OCI-LY7 (cell line): ENCODE measurements at regions of chr2 and their contacts with region 1.

Region 1: GRCh38 chr2:24164125-24164973 is 10.5 kb upstream of the FAM228A start:
- DNase-seq: peak; percentile 67
- H3K4me3 ChIP-seq: no peak overlapping the region
- H3K27ac ChIP-seq: no peak overlapping the region
- H3K4me1 ChIP-seq: no peaks in the 10 kb centered on the region
- CTCF ChIP-seq: peak; percentile 99

Region 2: GRCh38 chr2:23824777-23825212 is 339.6 kb before region 1 on chr2:
- CTCF ChIA-PET with region 1: no interaction called
- POLR2A ChIA-PET with region 1: no interaction called
- intact Hi-C with region 1: loop called (anchors 1 kb)
- DNase-seq: peak; percentile 73
- H3K4me3 ChIP-seq: no peak overlapping the region
- H3K27ac ChIP-seq: no peak overlapping the region
- H3K4me1 ChIP-seq: peaks cover 7% of the 10 kb centered on the region
- CTCF ChIP-seq: peak; percentile 93

Region 3: GRCh38 chr2:23988371-23988770 is 176.0 kb before region 1 on chr2:
- CTCF ChIA-PET with region 1: no interaction called
- POLR2A ChIA-PET with region 1: interaction called, 4 read pairs
- intact Hi-C with region 1: loop called (anchors 5 kb)
- DNase-seq: peak; percentile 38
- H3K4me3 ChIP-seq: no peak overlapping the region
- H3K27ac ChIP-seq: no peak overlapping the region
- H3K4me1 ChIP-seq: no peaks in the 10 kb centered on the region
- CTCF ChIP-seq: peak; percentile 74

Region 4: GRCh38 chr2:24021193-24021998 is 143.0 kb before region 1 on chr2:
- CTCF ChIA-PET with region 1: no interaction called
- POLR2A ChIA-PET with region 1: no interaction called
- intact Hi-C with region 1: loop called (anchors 1 kb)
- DNase-seq: peak; percentile 44
- H3K4me3 ChIP-seq: no peak overlapping the region
- H3K27ac ChIP-seq: no peak overlapping the region
- H3K4me1 ChIP-seq: no peaks in the 10 kb centered on the region
- CTCF ChIP-seq: peak; percentile 68

Region 5: DNA sequence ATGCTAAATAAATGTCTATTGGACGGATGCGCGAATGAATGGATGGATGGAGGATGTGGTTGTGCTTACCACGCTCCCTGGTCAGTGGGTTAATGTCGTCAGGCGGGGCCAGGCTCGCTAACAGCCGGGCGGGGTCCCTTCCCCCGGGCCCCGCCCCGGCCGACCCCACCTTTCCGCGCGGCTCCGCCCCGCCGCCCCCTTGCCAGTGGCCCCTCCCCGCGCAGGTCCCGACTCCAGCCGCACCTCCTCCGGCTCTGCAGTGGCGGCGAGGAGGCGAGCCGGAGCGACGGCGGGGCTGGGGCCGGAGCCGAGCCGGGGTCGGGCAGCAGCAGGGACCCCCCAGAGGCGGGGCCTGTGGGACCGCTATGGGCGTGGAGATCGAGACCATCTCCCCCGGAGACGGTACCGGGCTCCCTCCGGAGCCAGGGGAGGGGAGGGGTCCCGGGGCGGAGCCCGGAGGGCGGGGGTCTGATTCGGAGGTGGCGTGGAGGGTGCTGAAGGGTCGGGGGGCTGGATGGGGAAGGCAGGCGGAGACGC is 114.8 kb before region 1 on chr2 and contains the start of gene FKBP1B:
- CTCF ChIA-PET with region 1: no interaction called
- POLR2A ChIA-PET with region 1: no interaction called
- intact Hi-C with region 1: no loop called
- DNase-seq: peak; percentile 74
- H3K4me3 ChIP-seq: peak within 1 kb of the TSS; percentile 77
- H3K27ac ChIP-seq: no peak within 1 kb of the TSS
- H3K4me1 ChIP-seq: peaks cover 24% of the 10 kb centered on the region
- CTCF ChIP-seq: no peak
- total RNA-seq, gene FKBP1B: 1.5 and 3.2 TPM in 2 replicates

Region 6: GRCh38 chr2:24176326-24176725 is 12.0 kb after region 1 on chr2:
- CTCF ChIA-PET with region 1: no interaction called
- POLR2A ChIA-PET with region 1: interaction called, 10 read pairs
- intact Hi-C with region 1: no loop called
- DNase-seq: no peak
- H3K4me3 ChIP-seq: no peak overlapping the region
- H3K27ac ChIP-seq: no peak overlapping the region
- H3K4me1 ChIP-seq: no peaks in the 10 kb centered on the region
- CTCF ChIP-seq: no peak

Region 7: DNA sequence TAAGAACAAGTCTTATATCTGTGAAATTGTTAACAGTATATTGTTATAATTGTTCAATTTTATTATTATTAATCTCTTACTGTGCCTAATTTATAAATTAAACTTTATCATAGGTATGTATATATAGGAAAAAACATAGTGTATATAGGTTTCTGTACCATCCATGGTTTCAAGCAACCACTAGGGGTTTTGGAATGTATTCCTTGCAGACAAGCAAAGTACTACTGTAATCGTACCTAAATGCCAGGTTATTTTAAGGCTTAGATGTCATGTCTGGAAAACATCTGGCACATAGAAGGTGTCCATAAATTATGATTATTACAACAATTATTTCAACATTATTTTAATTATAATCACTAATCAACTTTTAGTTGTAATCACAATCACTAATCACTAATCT is 187.6 kb after region 1 on chr2:
- CTCF ChIA-PET with region 1: no interaction called
- POLR2A ChIA-PET with region 1: no interaction called
- intact Hi-C with region 1: no loop called
- DNase-seq: no peak
- H3K4me3 ChIP-seq: no peak overlapping the region
- H3K27ac ChIP-seq: no peak overlapping the region
- H3K4me1 ChIP-seq: peaks cover 32% of the 10 kb centered on the region
- CTCF ChIP-seq: peak; percentile 48

Region 8: DNA sequence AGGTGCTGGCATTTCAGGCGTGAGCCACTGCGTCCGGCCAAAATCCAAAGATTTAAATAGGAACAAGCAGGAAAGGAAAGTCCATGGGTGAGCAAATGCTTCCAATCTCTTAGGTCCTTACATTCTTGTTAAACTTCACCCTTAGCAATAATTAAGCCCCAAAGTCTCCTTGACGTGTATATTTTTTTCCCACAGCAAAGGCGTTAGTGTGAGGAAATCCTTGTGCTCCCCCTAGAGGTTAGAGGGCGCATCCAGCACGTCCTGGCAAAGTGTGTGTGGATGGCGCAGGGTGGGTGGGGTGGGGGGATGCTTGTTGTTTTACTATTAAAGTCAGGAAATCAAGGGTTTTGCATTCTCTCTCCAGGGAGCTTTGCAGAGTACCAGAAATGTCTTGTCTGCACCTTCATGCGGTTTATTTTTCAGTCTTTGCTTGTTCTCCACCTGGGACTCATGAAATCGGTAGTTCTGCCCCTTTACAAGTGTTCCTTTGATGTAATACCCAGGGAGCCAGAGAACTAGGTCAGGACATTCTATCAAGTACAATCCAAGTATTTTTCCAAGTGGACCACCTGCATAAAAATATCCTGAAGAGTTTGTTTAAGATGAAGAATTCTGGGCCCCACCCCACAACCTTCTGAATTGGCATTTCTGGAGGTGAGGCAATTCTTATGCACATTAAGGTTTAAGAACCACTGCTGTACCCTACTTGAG is 218.2 kb after region 1 on chr2:
- CTCF ChIA-PET with region 1: no interaction called
- POLR2A ChIA-PET with region 1: no interaction called
- intact Hi-C with region 1: loop called (anchors 2 kb)
- DNase-seq: peak; percentile 79
- H3K4me3 ChIP-seq: no peak overlapping the region
- H3K27ac ChIP-seq: no peak overlapping the region
- H3K4me1 ChIP-seq: peaks cover 5% of the 10 kb centered on the region
- CTCF ChIP-seq: peak; percentile 71